BJ (cell line): ENCODE measurements at regions of chr2 and their contacts with region 1.

Region 1: GRCh38 chr2:100242891-100243619 is 79.2 kb downstream of the LONRF2 start:
- DNase-seq: no peak
- H3K4me3 ChIP-seq: no peak overlapping the region
- H3K27me3 ChIP-seq: no peaks in the 10 kb centered on the region
- CTCF ChIP-seq: peak; percentile 83

Region 2: DNA sequence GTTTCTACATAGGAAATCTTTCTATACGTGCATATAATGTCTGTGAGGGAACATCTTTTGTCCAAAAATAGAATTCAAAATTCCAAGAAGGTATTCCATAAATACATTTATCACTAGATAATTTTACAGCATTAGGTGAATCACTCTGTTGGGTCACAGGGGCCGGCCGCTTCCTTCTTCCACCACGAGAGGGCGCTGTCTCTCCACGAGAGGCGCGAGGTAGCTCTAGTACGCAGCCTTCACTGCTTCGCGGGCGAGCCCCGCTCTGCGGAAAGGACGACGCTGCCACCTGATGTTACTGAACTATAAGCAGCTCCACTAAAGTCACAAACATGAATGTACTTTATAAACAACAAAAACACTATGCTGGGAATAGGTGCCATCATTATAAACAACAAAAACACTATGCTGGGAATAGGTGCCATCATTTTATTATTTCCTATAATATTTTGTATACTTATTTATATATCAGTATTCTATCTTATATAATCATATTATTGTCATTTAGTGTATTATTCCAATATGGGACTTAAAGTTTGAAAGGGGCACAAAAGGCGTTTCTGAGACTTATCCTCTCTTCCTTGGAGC is 683.9 kb before region 1 on chr2:
- CTCF ChIA-PET with region 1: interaction called, 10 read pairs
- POLR2A ChIA-PET with region 1: no interaction called
- DNase-seq: no peak
- H3K4me3 ChIP-seq: no peak overlapping the region
- H3K27me3 ChIP-seq: no peaks in the 10 kb centered on the region
- CTCF ChIP-seq: peak; percentile 96

Region 3: GRCh38 chr2:100272841-100273329 is 29.8 kb after region 1 on chr2:
- CTCF ChIA-PET with region 1: no interaction called
- POLR2A ChIA-PET with region 1: no interaction called
- DNase-seq: no peak
- H3K4me3 ChIP-seq: no peak overlapping the region
- H3K27me3 ChIP-seq: no peaks in the 10 kb centered on the region
- CTCF ChIP-seq: no peak